OCI-LY7 (cell line): ENCODE measurements at regions of chr18 and their contacts with region 1.

Region 1: DNA sequence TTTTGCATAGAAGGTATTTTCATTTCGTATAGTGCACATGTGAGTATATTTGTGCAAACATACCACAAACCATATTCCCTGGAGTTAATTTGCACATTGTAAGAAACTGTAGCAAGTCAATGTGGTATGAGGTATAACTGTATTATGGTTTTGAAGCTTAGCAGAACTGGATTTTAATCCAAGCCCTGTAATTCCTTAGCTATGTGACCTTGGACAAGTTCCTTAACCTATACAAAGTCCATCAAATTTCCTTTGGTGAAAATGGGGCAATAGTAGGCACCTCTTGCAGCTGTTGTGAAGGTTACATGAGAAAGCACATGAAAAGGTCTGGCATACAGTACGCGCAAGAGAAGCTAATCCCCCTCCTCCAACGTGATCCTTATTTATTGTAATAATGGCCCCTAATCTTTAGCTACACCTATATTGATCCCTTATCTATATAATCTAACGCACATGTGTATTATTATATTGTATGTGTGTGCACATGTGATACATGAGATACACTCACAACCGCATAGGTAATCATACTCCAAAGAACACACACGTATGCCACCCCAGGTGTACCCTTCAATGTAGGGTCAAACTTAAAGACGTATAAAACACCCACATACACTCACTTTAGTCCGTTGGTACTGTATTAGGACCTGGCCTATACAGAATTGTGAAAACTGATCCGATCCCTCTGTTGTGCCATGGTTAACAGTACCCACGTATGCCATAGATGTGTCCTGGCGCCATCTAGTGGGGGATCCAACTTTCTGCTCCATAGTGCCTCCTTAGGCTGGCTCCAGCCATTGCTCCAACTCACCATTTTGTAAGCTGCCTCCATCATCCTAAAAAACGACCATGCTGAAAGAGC is 402.9 kb upstream of the SLC14A2 start:
- DNase-seq: peak; percentile 74
- H3K4me3 ChIP-seq: no peak overlapping the region
- H3K27ac ChIP-seq: no peak overlapping the region
- H3K4me1 ChIP-seq: no peaks in the 10 kb centered on the region
- CTCF ChIP-seq: peak; percentile 87

Region 2: DNA sequence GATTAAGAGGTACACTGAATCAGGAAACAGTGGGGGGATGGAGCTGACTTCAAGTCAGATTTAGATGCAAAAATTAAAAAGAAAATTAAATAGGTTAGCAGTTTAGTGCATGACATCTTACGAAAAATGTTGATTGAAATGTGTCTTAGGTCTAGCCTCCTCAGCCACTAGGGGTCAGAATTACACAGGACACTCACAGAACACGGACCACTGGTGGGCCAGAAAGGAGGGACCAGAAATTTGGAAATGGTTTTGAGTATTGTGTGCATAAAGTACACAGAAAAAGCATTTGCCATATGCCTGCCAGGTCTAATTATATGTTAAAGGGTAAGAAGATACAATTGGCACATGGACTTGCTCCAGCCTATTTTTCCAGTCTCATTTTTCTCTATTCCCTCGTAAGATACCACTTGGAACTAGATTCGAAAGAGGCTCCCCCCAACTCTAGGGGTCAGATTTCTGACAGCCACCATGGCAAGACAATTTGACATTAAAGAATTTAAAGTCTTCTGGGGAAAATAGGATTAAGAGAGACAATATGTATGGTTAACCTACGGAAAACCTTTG is 1082.0 kb before region 1 on chr18:
- CTCF ChIA-PET with region 1: no interaction called
- POLR2A ChIA-PET with region 1: no interaction called
- intact Hi-C with region 1: loop called (anchors 5 kb)
- DNase-seq: peak; percentile 31
- H3K4me3 ChIP-seq: no peak overlapping the region
- H3K27ac ChIP-seq: no peak overlapping the region
- H3K4me1 ChIP-seq: no peaks in the 10 kb centered on the region
- CTCF ChIP-seq: peak; percentile 75

Region 3: GRCh38 chr18:44887227-44887631 is 325.2 kb before region 1 on chr18:
- CTCF ChIA-PET with region 1: no interaction called
- POLR2A ChIA-PET with region 1: no interaction called
- intact Hi-C with region 1: no loop called
- DNase-seq: no peak
- H3K4me3 ChIP-seq: no peak overlapping the region
- H3K27ac ChIP-seq: no peak overlapping the region
- H3K4me1 ChIP-seq: peaks cover 5% of the 10 kb centered on the region
- CTCF ChIP-seq: no peak

Region 4: DNA sequence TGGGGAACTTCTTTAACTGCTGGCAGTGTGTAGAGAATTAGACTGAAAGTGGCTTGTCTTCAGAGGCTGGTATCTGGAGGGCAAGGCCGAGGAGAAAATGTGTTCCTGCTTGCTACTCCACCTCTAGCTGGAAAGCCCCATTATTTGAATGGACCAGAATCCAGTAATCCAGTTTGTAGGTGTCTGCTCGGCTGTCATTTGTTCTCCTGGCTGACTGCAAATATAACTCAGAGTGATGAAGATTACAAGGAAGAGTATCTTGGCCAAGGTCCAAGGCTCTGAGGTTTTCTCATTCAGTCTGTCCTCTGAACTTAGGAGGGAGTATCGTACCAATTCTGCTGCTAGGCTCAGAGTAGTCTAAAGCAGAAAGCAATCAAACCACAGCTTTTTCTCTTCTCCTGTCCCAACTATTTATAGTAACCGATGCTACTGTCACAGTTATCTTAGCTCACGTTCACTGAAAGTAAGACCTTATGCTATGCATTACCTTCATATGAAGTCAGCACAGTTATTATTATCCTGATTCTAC is 303.2 kb before region 1 on chr18:
- CTCF ChIA-PET with region 1: no interaction called
- POLR2A ChIA-PET with region 1: no interaction called
- intact Hi-C with region 1: loop called (anchors 10 kb)
- DNase-seq: no peak
- H3K4me3 ChIP-seq: no peak overlapping the region
- H3K27ac ChIP-seq: no peak overlapping the region
- H3K4me1 ChIP-seq: no peaks in the 10 kb centered on the region
- CTCF ChIP-seq: no peak

Region 5: GRCh38 chr18:45090526-45091140 is 121.8 kb before region 1 on chr18:
- CTCF ChIA-PET with region 1: interaction called, 4 read pairs
- POLR2A ChIA-PET with region 1: no interaction called
- intact Hi-C with region 1: loop called (anchors 5 kb)
- DNase-seq: no peak
- H3K4me3 ChIP-seq: no peak overlapping the region
- H3K27ac ChIP-seq: no peak overlapping the region
- H3K4me1 ChIP-seq: no peaks in the 10 kb centered on the region
- CTCF ChIP-seq: no peak

Region 6: GRCh38 chr18:45103319-45104048 is 108.9 kb before region 1 on chr18:
- CTCF ChIA-PET with region 1: no interaction called
- POLR2A ChIA-PET with region 1: no interaction called
- intact Hi-C with region 1: loop called (anchors 5 kb)
- DNase-seq: peak; percentile 71
- H3K4me3 ChIP-seq: peak overlapping the region; percentile 44
- H3K27ac ChIP-seq: peak overlapping the region; percentile 93
- H3K4me1 ChIP-seq: peaks cover 66% of the 10 kb centered on the region
- CTCF ChIP-seq: no peak